A549 (cell line): ENCODE measurements at regions of chr22 and their contacts with region 1.

Region 1: DNA sequence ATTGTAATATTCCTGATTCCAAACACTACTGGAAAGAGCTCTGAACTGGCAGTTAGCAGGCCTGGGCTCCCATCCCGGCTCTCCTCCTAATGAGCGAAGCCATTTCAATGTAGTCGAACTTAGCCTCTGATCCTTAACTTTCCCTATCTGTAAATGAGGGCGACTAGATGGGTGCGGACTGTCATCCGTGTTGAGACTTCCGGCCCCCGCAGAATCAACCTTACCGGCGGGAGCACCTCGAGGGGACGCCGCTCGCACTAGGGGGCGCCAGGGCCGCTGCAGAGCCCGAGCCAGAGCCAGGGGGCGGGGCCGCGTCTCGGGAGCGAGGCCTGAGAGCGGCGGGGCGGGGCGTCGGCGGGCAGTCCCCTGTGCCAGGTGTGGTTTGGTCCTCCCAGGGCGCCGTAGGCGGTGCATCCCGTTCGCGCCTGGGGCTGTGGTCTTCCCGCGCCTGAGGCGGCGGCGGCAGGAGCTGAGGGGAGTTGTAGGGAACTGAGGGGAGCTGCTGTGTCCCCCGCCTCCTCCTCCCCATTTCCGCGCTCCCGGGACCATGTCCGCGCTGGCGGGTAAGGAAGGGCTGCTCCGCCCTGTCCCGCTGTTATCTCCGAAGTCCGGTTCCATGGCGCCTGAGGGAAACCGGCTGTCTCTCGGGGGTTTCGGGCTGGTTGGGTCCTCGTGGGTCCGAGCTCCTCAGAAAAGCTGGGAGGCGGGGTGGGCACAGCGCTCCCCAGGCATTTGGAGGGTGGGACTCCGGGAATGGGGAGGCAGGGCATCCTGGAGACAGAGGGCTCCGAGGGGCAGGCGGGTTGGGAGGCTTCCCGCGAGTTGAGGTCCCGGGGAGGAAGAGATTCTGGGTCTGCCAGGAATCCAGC is at the start of gene LIMK2:
- DNase-seq: peak; percentile 78 to 84
- ATAC-seq: peak; percentile 98
- H3K4me3 ChIP-seq: peak within 1 kb of the TSS; percentile 79
- H3K27ac ChIP-seq: peak within 1 kb of the TSS; percentile 81 to 88
- H3K4me1 ChIP-seq: peaks cover 8% of the 10 kb centered on the region; the same call in 1 of the 3 replicates
- CTCF ChIP-seq: peak; percentile 72
- EP300 ChIP-seq: no peak
- POLR2A ChIP-seq: peak; percentile 64
- RAD21 ChIP-seq: peak; percentile 59 to 76
- polyA plus RNA-seq, gene LIMK2: 3.1 and 4.9 TPM in 2 replicates

Region 2: DNA sequence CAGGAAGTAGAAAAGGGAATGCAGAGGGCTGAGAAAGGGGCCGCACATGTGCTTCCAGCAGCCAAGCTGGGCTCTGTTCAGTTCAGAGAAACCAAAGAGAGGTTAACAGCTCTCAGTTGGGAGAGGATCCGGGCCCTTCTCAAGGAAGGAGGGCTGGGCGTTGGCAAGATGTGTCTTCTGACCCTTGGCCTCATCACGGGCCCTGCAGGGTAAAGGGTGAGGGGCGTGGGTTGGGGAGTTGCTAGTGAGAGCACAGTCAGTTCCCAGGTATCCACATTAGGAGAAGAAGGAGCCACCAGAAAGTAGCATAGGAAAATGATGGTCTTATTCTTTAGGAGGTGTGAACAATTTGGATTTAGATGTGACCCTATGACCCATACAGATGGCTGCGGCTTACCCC is 444.4 kb before region 1 on chr22:
- CTCF ChIA-PET with region 1: no interaction called
- POLR2A ChIA-PET with region 1: no interaction called
- DNase-seq: no peak
- ATAC-seq: no peak
- H3K4me3 ChIP-seq: no peak overlapping the region
- H3K27ac ChIP-seq: 0 out of 6 replicates have a peak overlapping the region, but pooled peaks of 1 of the 2 experiments have one; percentile 25
- H3K4me1 ChIP-seq: peaks cover 11% of the 10 kb centered on the region
- CTCF ChIP-seq: no peak
- EP300 ChIP-seq: no peak
- POLR2A ChIP-seq: no peak
- RAD21 ChIP-seq: no peak

Region 3: DNA sequence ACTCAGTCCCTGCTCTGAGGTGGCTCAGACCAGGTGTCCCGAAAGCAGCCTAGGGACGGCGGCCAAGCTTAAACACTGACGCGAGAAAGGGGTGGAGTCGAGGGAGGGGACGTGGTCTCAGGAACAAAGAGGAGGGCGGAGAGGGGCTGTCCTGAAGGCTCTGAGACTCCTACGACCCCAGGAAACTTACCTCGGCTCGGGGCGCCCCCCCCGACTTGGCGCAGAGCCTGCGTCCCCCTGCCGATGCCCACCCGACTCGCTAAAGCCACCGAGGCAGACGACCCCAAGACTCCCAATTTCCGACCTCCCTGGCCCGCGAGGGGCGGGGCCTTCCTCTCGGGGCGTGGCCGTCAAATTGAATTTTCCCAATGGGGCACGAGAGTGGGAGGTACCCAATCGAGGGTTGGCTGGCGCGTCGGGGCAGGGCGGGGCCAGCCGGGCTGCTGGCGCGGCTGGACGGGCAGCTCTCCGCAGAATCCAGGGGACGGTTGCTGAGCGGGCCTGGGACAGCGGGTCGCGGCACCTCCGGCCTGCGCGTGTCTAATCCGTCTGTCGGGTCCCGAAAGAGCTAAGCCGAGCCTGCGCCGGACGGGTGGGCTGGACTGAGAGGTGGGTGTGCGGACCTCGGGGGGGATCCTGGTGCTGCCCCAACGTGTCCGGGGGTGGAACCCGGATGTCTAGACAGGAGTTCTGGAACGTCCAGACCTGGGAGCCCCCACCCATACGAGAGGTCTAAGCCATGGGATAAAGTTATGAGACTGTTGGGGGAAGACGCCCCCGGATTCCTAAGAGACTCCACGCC is 131.0 kb before region 1 on chr22 and contains the start of gene SMTN:
- CTCF ChIA-PET with region 1: no interaction called
- POLR2A ChIA-PET with region 1: no interaction called
- DNase-seq: peak; percentile 80 to 82
- ATAC-seq: peak; percentile 80 to 86
- H3K4me3 ChIP-seq: peak within 1 kb of the TSS; percentile 95
- H3K27ac ChIP-seq: peak within 1 kb of the TSS; percentile 92 to 94
- H3K4me1 ChIP-seq: peaks cover 26% of the 10 kb centered on the region
- CTCF ChIP-seq: no peak
- EP300 ChIP-seq: no peak
- POLR2A ChIP-seq: peak; percentile 73; the same call in 1 of the 2 replicates
- RAD21 ChIP-seq: 0 out of 5 replicates have a peak, but pooled peaks of 1 of the 2 experiments have one; percentile 10
- polyA plus RNA-seq, gene SMTN: 7.0 and 12.7 TPM in 2 replicates

Region 4: GRCh38 chr22:31119026-31119717 is 92.9 kb before region 1 on chr22:
- CTCF ChIA-PET with region 1: no interaction called
- POLR2A ChIA-PET with region 1: no interaction called
- DNase-seq: no peak
- ATAC-seq: no peak
- H3K4me3 ChIP-seq: no peak overlapping the region
- H3K27ac ChIP-seq: no peak overlapping the region
- H3K4me1 ChIP-seq: peaks cover 11% of the 10 kb centered on the region
- CTCF ChIP-seq: no peak
- EP300 ChIP-seq: no peak
- POLR2A ChIP-seq: no peak
- RAD21 ChIP-seq: no peak

Region 5: GRCh38 chr22:31179356-31179755 is 32.7 kb before region 1 on chr22:
- CTCF ChIA-PET with region 1: interaction called, 15 read pairs
- POLR2A ChIA-PET with region 1: interaction called, 4 read pairs
- DNase-seq: peak in 1 of 2 experiments; percentile 60
- ATAC-seq: peak; percentile 64 to 74; a peak in 5 of 6 replicates
- H3K4me3 ChIP-seq: no peak overlapping the region
- H3K27ac ChIP-seq: peak overlapping the region; percentile 55; a peak in 3 of 6 replicates
- H3K4me1 ChIP-seq: peaks cover 24% of the 10 kb centered on the region
- CTCF ChIP-seq: no peak
- EP300 ChIP-seq: no peak
- POLR2A ChIP-seq: no peak
- RAD21 ChIP-seq: no peak

Region 6: DNA sequence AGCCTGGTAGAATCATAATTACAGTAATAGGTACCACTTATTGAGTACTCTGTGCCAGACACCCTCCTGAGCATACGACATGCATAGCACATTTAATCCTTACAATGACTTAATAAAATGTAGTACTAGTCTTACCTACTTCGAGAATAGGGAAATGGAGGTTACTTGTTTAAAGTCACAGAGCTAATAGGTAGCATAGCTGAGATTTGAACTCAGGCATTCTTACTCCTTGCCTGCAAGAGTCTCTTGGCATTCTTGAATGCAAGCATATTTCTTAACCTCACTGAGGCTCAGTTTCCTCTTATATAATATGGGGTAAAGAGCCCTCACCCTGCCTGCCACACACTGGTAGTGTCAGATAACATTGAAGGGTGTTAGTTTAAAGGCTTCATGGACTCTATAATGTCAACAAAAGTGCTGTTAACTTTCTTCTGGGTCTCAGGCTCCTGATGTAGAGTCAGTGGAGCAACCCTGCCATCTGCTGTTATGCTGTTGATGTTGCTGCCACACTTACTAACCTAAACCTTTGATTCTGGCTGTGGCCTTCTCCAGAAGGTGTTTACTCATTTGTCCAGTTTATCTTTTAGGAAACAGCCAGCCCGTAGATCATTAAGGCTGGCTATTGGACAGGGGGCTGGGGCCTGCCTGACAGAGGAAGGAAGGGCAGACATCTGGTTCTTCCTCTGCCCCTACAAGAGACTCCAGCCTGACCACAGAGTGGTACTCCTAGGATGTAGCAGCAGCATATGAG is 18.9 kb after region 1 on chr22:
- CTCF ChIA-PET with region 1: interaction called, 64 read pairs
- POLR2A ChIA-PET with region 1: no interaction called
- DNase-seq: peak in 1 of 2 experiments; percentile 40
- ATAC-seq: peak; percentile 73 to 78; a peak in 5 of 6 replicates
- H3K4me3 ChIP-seq: no peak overlapping the region
- H3K27ac ChIP-seq: no peak overlapping the region
- H3K4me1 ChIP-seq: 0 out of 3 replicates have a peak, but pooled peaks cover 6% of the 10 kb centered on the region
- CTCF ChIP-seq: peak; percentile 50
- EP300 ChIP-seq: no peak
- POLR2A ChIP-seq: no peak
- RAD21 ChIP-seq: peak; percentile 61 to 66

Region 7: GRCh38 chr22:31248138-31248745 is 36.1 kb after region 1 on chr22:
- CTCF ChIA-PET with region 1: interaction called, 24 read pairs
- POLR2A ChIA-PET with region 1: interaction called, 3 read pairs
- DNase-seq: no peak
- ATAC-seq: peak in 1 of 2 experiments; percentile 66; a peak in 3 of 6 replicates
- H3K4me3 ChIP-seq: no peak overlapping the region
- H3K27ac ChIP-seq: 0 out of 6 replicates have a peak overlapping the region, but pooled peaks of 1 of the 2 experiments have one; percentile 10
- H3K4me1 ChIP-seq: peaks cover 28% of the 10 kb centered on the region
- CTCF ChIP-seq: no peak
- EP300 ChIP-seq: no peak
- POLR2A ChIP-seq: no peak
- RAD21 ChIP-seq: no peak

Region 8: DNA sequence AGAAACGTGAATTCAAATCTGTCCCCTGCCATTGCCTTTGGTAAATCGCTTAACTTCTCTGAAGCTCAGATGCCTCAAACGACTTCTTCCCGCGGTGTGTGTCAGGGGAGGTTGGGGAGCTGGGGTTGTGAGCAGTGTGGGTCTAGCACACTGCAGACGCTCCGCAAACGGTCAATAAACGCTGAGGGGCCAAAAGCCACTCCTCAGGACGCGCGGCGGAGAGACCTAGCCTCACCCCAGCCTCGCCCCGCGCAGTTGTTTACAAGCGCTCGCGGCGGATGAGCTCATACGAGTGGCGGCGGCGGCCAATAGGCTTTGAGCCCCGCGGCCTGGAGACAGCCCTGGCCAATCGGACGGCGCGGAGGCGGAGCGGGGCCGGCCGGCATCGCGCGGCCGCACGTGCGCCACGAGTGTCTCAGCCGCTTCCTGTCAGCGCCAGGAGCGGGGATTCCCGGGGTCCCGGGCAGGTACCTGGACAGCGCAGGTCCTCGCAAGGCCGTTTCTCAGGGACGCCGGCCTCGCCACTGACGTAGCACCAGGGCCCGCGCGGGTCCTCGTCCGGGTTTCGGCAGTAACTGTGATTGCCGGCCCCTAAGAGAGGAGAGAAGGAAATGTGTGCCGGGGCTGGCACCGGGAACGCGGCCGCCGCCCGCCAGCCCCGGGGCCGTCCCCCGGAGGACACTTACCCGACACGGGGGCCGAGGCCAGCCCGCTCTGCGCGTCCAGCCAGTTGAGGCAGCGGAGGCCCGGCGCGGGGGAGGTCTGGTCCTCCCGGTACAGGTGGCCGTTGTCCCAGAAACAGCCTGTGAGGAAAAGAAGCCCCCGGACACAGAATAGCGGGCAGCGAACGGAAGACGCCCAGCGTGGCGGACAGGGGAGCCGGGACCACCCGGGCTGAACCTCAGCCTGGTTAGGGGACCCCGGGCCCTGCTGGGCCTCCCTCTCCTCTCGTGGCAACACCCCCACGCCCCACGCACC is 78.7 kb after region 1 on chr22:
- CTCF ChIA-PET with region 1: interaction called, 15 read pairs
- POLR2A ChIA-PET with region 1: no interaction called
- DNase-seq: peak; percentile 78 to 89
- ATAC-seq: peak; percentile 95 to 97
- H3K4me3 ChIP-seq: peak overlapping the region; percentile 50
- H3K27ac ChIP-seq: peak overlapping the region; percentile 59 to 84; a peak in 5 of 6 replicates
- H3K4me1 ChIP-seq: peaks cover 20% of the 10 kb centered on the region
- CTCF ChIP-seq: no peak
- EP300 ChIP-seq: no peak
- POLR2A ChIP-seq: no peak
- RAD21 ChIP-seq: no peak

Region 9: GRCh38 chr22:31583861-31584485 is 371.9 kb after region 1 on chr22:
- CTCF ChIA-PET with region 1: no interaction called
- POLR2A ChIA-PET with region 1: no interaction called
- DNase-seq: no peak
- ATAC-seq: no peak
- H3K4me3 ChIP-seq: no peak overlapping the region
- H3K27ac ChIP-seq: no peak overlapping the region
- H3K4me1 ChIP-seq: peaks cover 7% of the 10 kb centered on the region; the same call in 2 of the 3 replicates
- CTCF ChIP-seq: no peak
- EP300 ChIP-seq: no peak
- POLR2A ChIP-seq: no peak
- RAD21 ChIP-seq: no peak